ENCODE measurements at regions of chr4 and their contacts with region 1.

Region 1: GRCh38 chr4:152500800-152501434 is 35.0 kb downstream of the FBXW7 start:
- DNase-seq: peak; percentile 68
- H3K4me3 Mint-ChIP-seq: no peak overlapping the region
- H3K27ac Mint-ChIP-seq: no peak overlapping the region
- H3K4me1 Mint-ChIP-seq: peaks cover 16% of the 10 kb centered on the region
- H3K27me3 Mint-ChIP-seq: no peaks in the 10 kb centered on the region

Region 2: GRCh38 chr4:152172146-152172545 is 328.8 kb before region 1 on chr4:
- CTCF ChIA-PET with region 1: no interaction called
- DNase-seq: no peak
- H3K4me3 Mint-ChIP-seq: no peak overlapping the region
- H3K27ac Mint-ChIP-seq: no peak overlapping the region
- H3K4me1 Mint-ChIP-seq: no peaks in the 10 kb centered on the region
- H3K27me3 Mint-ChIP-seq: peaks cover 20% of the 10 kb centered on the region

Region 3: DNA sequence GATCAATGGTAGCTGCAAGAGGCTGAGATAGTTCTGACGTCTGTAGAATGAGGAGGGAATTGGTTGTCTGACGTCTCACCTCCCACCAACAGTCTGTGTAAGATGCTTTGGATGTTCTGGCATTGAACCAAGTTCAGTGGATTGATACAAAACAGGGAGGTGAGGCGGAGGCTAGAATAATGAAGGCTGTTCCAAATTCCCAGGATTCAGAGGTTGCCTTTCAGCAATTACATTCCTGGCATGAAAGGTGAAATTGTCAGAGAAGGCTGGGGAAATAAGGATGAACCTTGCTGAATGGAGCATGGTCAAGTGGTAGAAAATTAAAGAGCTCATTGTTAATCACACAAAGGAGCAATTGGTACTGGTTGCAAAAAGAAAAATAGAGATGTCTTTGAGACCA is 206.6 kb before region 1 on chr4:
- CTCF ChIA-PET with region 1: no interaction called
- DNase-seq: no peak
- H3K4me3 Mint-ChIP-seq: no peak overlapping the region
- H3K27ac Mint-ChIP-seq: no peak overlapping the region
- H3K4me1 Mint-ChIP-seq: no peaks in the 10 kb centered on the region
- H3K27me3 Mint-ChIP-seq: peaks cover 13% of the 10 kb centered on the region

Region 4: GRCh38 chr4:152348670-152349069 is 152.2 kb before region 1 on chr4:
- CTCF ChIA-PET with region 1: no interaction called
- DNase-seq: peak; percentile 42
- H3K4me3 Mint-ChIP-seq: no peak overlapping the region
- H3K27ac Mint-ChIP-seq: no peak overlapping the region
- H3K4me1 Mint-ChIP-seq: peaks cover 25% of the 10 kb centered on the region
- H3K27me3 Mint-ChIP-seq: no peaks in the 10 kb centered on the region

Region 5: GRCh38 chr4:152408514-152409327 is 92.2 kb before region 1 on chr4:
- CTCF ChIA-PET with region 1: interaction called, 13 read pairs
- DNase-seq: no peak
- H3K4me3 Mint-ChIP-seq: no peak overlapping the region
- H3K27ac Mint-ChIP-seq: no peak overlapping the region
- H3K4me1 Mint-ChIP-seq: no peaks in the 10 kb centered on the region
- H3K27me3 Mint-ChIP-seq: no peaks in the 10 kb centered on the region

Region 6: DNA sequence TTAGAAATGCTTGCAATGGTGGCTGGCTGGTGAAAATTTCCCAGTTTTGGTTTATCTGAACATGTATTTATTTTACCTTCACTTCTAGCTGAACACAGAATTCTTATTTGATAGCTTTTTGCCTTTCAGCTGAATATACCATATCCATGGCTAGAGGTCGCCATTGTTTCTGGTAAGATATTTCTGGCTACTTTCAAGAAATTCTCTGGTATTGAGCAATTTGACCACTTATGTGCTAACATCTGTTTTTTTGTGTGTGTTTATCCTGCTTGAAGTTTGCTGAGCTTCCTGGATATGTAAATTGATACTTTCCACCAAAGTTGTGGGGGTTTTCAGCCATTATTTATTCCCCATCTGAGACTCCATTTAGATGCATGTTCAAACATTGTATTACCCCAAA is 40.4 kb before region 1 on chr4:
- CTCF ChIA-PET with region 1: interaction called, 18 read pairs
- DNase-seq: no peak
- H3K4me3 Mint-ChIP-seq: no peak overlapping the region
- H3K27ac Mint-ChIP-seq: no peak overlapping the region
- H3K4me1 Mint-ChIP-seq: peaks cover 73% of the 10 kb centered on the region
- H3K27me3 Mint-ChIP-seq: no peaks in the 10 kb centered on the region

Region 7: DNA sequence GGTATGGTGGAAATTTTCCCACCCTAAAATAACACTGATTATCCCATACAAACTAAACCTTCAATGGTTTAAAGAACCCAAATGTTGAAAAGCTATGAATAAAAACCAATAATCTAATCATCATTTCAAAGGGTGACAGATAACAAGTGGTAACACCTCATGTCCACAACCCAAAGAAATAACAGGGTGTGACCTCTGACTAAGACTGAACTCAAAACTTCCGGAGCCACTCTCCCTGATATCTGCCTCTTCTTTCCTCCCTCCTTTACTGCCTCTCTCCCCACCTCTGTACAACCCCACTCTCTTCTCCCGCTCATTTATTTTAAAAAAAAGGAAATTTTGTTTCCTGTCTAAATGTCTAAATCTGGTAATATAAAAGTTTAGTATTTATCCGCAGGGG is 23.5 kb after region 1 on chr4:
- CTCF ChIA-PET with region 1: interaction called, 17 read pairs
- DNase-seq: no peak
- H3K4me3 Mint-ChIP-seq: no peak overlapping the region
- H3K27ac Mint-ChIP-seq: peak overlapping the region; percentile 56
- H3K4me1 Mint-ChIP-seq: peaks cover 19% of the 10 kb centered on the region
- H3K27me3 Mint-ChIP-seq: no peaks in the 10 kb centered on the region

Region 8: DNA sequence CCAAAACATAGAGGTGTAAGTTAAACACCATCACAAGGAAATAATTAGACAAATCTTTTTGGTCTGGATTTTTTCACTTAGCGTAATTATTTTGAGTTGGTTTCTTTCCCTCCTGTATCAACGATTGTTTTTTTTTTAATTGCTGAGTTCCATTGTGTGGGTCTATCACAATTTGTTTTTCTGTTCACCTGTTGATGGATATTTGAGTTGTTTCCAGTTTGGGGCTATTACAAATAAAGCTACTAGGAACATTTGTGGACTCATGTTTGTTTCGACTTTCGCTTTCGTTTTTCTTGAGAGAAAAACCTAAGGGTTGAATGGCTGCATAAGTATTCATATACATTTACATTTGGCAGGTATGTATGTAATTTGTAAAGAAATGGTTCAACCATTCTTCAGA is 55.4 kb after region 1 on chr4:
- CTCF ChIA-PET with region 1: interaction called, 13 read pairs
- DNase-seq: no peak
- H3K4me3 Mint-ChIP-seq: peak overlapping the region; percentile 39
- H3K27ac Mint-ChIP-seq: peak overlapping the region; percentile 75
- H3K4me1 Mint-ChIP-seq: peaks cover 51% of the 10 kb centered on the region
- H3K27me3 Mint-ChIP-seq: no peaks in the 10 kb centered on the region

Region 9: GRCh38 chr4:152640058-152640833 is 139.3 kb after region 1 on chr4:
- CTCF ChIA-PET with region 1: interaction called, 168 read pairs
- DNase-seq: no peak
- H3K4me3 Mint-ChIP-seq: no peak overlapping the region
- H3K27ac Mint-ChIP-seq: peak overlapping the region; percentile 39
- H3K4me1 Mint-ChIP-seq: peaks cover 19% of the 10 kb centered on the region
- H3K27me3 Mint-ChIP-seq: no peaks in the 10 kb centered on the region

Region 10: GRCh38 chr4:152735396-152735859 is 234.5 kb after region 1 on chr4:
- CTCF ChIA-PET with region 1: interaction called, 23 read pairs
- DNase-seq: no peak
- H3K4me3 Mint-ChIP-seq: no peak overlapping the region
- H3K27ac Mint-ChIP-seq: no peak overlapping the region
- H3K4me1 Mint-ChIP-seq: no peaks in the 10 kb centered on the region
- H3K27me3 Mint-ChIP-seq: peaks cover 7% of the 10 kb centered on the region

Measured in activated naive CD4-positive, alpha-beta T cell treated with anti-CD3 and anti-CD28 coated beads, Interleukin-2, amount 10 ng/mL, durations not matched to agents 7 days and 5 days (primary cell).